ENCODE measurements at regions of chr1 and their contacts with region 1.

Region 1: DNA sequence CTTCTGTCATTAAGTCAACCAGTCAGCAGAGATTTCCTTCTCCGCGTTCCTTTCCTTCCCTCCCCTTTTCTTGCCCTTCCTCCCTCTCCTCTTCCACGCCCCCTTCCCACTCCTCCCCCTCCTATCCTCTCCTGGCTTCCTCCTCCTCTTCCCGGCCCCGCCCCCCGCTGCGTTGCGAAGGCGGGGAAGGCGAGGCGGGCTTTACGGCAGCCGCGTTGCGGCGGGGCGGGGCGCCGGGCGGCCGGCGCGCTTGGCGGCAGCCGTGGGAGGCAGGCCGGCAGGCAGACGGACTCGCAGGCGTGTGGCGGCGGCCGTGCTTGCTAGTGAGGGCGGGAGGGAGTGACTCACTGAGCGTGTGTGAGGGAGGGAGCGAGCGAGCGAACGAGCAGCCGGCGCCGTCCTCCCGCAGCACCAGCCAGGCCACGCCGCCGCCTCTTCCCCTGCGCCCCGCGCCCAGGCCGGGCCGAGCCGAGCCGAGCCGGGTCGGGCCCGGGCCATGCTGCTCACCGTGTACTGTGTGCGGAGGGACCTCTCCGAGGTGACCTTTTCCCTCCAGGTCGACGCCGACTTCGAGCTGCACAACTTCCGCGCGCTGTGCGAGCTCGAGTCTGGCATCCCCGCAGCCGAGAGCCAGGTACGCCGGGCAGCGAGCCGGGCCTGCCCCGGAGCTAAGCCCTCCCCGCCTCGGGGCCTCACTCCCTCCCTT is at the start of gene DDI2:
- DNase-seq: peak; percentile 94
- H3K4me3 Mint-ChIP-seq: peak within 1 kb of the TSS; percentile 96
- H3K27ac Mint-ChIP-seq: peak within 1 kb of the TSS; percentile 93
- H3K4me1 Mint-ChIP-seq: peaks cover 43% of the 10 kb centered on the region
- H3K27me3 Mint-ChIP-seq: no peaks in the 10 kb centered on the region
- total RNA-seq, gene DDI2: 49.9 and 51.4 TPM in 2 replicates

Region 2: GRCh38 chr1:15584489-15585363 is 32.6 kb before region 1 on chr1 and contains the start of gene AGMAT:
- intact Hi-C with region 1: loop called (anchors 1 kb)
- DNase-seq: peak; percentile 43
- H3K4me3 Mint-ChIP-seq: peak within 1 kb of the TSS; percentile 89
- H3K27ac Mint-ChIP-seq: peak within 1 kb of the TSS; percentile 89
- H3K4me1 Mint-ChIP-seq: peaks cover 26% of the 10 kb centered on the region
- H3K27me3 Mint-ChIP-seq: no peaks in the 10 kb centered on the region
- total RNA-seq, gene AGMAT: 34.4 and 34.5 TPM in 2 replicates

Region 3: GRCh38 chr1:15649937-15650336 is 32.6 kb after region 1 on chr1:
- intact Hi-C with region 1: loop called (anchors 2 kb)
- DNase-seq: no peak
- H3K4me3 Mint-ChIP-seq: no peak overlapping the region
- H3K27ac Mint-ChIP-seq: no peak overlapping the region
- H3K4me1 Mint-ChIP-seq: no peaks in the 10 kb centered on the region
- H3K27me3 Mint-ChIP-seq: no peaks in the 10 kb centered on the region

Region 4: GRCh38 chr1:15835741-15836510 is 218.6 kb after region 1 on chr1:
- intact Hi-C with region 1: loop called (anchors 2 kb)
- DNase-seq: peak; percentile 99
- H3K4me3 Mint-ChIP-seq: peak overlapping the region; percentile 95
- H3K27ac Mint-ChIP-seq: peak overlapping the region; percentile 99
- H3K4me1 Mint-ChIP-seq: peaks cover 22% of the 10 kb centered on the region
- H3K27me3 Mint-ChIP-seq: peaks cover 3% of the 10 kb centered on the region

Region 5: GRCh38 chr1:15911141-15911540 is 293.8 kb after region 1 on chr1:
- intact Hi-C with region 1: no loop called
- DNase-seq: no peak
- H3K4me3 Mint-ChIP-seq: no peak overlapping the region
- H3K27ac Mint-ChIP-seq: no peak overlapping the region
- H3K4me1 Mint-ChIP-seq: peaks cover 12% of the 10 kb centered on the region
- H3K27me3 Mint-ChIP-seq: no peaks in the 10 kb centered on the region

Region 6: GRCh38 chr1:15966081-15966955 is 349.0 kb after region 1 on chr1:
- intact Hi-C with region 1: loop called (anchors 5 kb)
- DNase-seq: peak; percentile 72
- H3K4me3 Mint-ChIP-seq: peak overlapping the region; percentile 79
- H3K27ac Mint-ChIP-seq: peak overlapping the region; percentile 95
- H3K4me1 Mint-ChIP-seq: peaks cover 77% of the 10 kb centered on the region
- H3K27me3 Mint-ChIP-seq: no peaks in the 10 kb centered on the region